Mammary epithelial cell (primary cell): ENCODE measurements at regions of chr5 and their contacts with region 1.

Region 1: GRCh38 chr5:16666883-16667398 is 50.1 kb upstream of the RETREG1 start:
- DNase-seq: no peak
- H3K4me3 ChIP-seq: no peak overlapping the region
- H3K27ac ChIP-seq: no peak overlapping the region
- H3K4me1 ChIP-seq: no peaks in the 10 kb centered on the region
- H3K27me3 ChIP-seq: no peaks in the 10 kb centered on the region
- CTCF ChIP-seq: peak; percentile 45 to 63

Region 2: DNA sequence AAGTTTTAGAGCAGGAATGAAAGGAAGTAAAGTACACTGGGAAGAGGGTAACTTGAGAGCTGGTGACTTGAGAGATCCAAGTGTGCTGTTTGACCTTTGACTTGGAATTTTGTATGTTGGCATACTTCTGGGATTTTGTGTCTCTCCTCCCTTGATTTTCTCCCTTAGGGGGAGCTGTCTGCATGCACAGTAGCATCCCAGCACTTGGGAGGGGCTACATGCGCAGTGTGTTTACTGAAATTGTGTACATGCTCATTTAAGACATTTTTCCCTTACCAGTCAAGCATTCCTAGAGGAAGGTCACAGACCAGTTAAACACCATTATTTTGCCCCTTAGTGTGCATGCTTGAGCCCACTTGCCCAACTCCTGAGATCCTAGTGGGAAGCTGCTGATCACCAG is 321.5 kb before region 1 on chr5:
- CTCF ChIA-PET with region 1: no interaction called
- dilution Hi-C with region 1: no loop called
- in situ Hi-C with region 1: no loop called
- intact Hi-C with region 1: loop called (anchors 5 kb)
- DNase-seq: no peak
- H3K4me3 ChIP-seq: no peak overlapping the region
- H3K27ac ChIP-seq: no peak overlapping the region
- H3K4me1 ChIP-seq: no peaks in the 10 kb centered on the region
- H3K27me3 ChIP-seq: no peaks in the 10 kb centered on the region
- CTCF ChIP-seq: peak; percentile 22 to 48

Region 3: GRCh38 chr5:16465544-16466466 is 201.1 kb before region 1 on chr5 and contains the start of gene ZNF622:
- CTCF ChIA-PET with region 1: no interaction called
- dilution Hi-C with region 1: no loop called
- in situ Hi-C with region 1: loop called in 1 of 2 experiments (anchors 25 kb)
- intact Hi-C with region 1: loop called (anchors 2 kb)
- DNase-seq: peak; percentile 89
- H3K4me3 ChIP-seq: peak within 1 kb of the TSS; percentile 78 to 98 (median 87)
- H3K27ac ChIP-seq: peak within 1 kb of the TSS; percentile 83
- H3K4me1 ChIP-seq: peaks cover 33% of the 10 kb centered on the region
- H3K27me3 ChIP-seq: no peaks in the 10 kb centered on the region
- CTCF ChIP-seq: no peak
- total RNA-seq, gene ZNF622: 32.2 to 32.3 TPM

Region 4: DNA sequence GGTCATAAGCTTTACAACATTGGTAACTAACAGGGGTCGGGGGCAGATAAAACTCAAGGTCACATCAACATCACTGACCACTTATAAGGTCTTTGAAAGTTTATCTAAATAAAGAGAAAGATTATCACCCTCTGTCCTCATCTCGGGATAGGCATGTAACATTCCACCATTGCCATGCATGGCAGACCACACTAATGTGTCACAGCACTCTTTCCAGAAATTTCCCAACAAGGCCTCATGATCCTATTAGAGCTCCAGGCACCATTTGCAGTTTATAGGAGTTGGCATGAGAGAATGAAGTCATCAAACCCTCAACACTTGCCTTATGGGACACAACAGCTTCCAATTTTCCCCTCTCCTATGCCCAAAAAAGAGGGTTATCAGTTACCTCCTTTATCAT is 169.4 kb before region 1 on chr5:
- CTCF ChIA-PET with region 1: no interaction called
- dilution Hi-C with region 1: loop called (anchors 5 kb)
- in situ Hi-C with region 1: no loop called
- intact Hi-C with region 1: no loop called
- DNase-seq: no peak
- H3K4me3 ChIP-seq: no peak overlapping the region
- H3K27ac ChIP-seq: no peak overlapping the region
- H3K4me1 ChIP-seq: peaks cover 18% of the 10 kb centered on the region
- H3K27me3 ChIP-seq: no peaks in the 10 kb centered on the region
- CTCF ChIP-seq: no peak

Region 5: GRCh38 chr5:16568875-16569580 is 97.9 kb before region 1 on chr5:
- CTCF ChIA-PET with region 1: no interaction called
- dilution Hi-C with region 1: no loop called
- in situ Hi-C with region 1: no loop called
- intact Hi-C with region 1: no loop called
- DNase-seq: peak; percentile 85
- H3K4me3 ChIP-seq: no peak overlapping the region
- H3K27ac ChIP-seq: no peak overlapping the region
- H3K4me1 ChIP-seq: peaks cover 19% of the 10 kb centered on the region
- H3K27me3 ChIP-seq: no peaks in the 10 kb centered on the region
- CTCF ChIP-seq: no peak

Region 6: DNA sequence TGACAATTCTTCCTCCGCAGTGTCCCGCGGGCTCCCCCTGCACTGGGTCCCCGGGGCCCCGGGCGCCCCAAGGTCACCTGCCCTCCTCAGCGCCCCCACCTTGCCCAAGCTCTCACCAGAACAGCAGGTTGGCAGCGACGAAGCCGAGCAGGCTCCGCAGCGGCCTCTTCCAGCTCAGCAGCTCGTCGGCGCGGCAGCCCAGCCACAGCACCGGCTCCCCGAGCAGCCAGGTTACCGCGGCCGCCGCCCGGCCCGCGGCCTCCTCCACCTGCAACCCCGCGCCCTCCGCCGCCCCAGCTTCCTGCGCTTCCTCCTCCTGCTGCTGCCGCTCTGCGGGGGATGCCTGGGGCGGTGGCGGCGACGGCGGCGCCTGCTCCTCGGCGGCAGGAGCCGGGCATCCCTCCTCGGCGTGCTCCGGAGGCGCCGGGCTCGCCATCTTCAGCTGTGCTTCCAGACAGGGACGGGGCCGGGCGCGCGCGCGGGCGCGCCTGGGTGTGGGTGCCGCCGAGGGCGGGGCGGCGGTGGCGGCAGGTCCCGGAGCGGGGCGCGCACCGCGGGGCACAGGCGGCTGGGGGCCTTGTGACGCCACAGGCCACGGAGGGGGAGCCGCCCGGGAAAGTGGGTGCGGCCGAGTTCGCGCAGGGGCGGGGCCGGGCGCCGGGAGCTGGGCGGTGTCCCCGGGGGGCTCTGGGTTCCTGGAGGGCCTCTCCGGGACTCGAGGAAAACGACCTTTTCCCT is 50.2 kb before region 1 on chr5 and contains the start of gene RETREG1:
- CTCF ChIA-PET with region 1: no interaction called
- dilution Hi-C with region 1: loop called (anchors 10 kb)
- in situ Hi-C with region 1: no loop called
- intact Hi-C with region 1: no loop called
- DNase-seq: peak; percentile 28
- H3K4me3 ChIP-seq: peak within 1 kb of the TSS; percentile 49 to 67 (median 57)
- H3K27ac ChIP-seq: no peak within 1 kb of the TSS
- H3K4me1 ChIP-seq: peaks cover 9% of the 10 kb centered on the region
- H3K27me3 ChIP-seq: no peaks in the 10 kb centered on the region
- CTCF ChIP-seq: no peak
- total RNA-seq, gene RETREG1: 14.2 to 49.7 TPM